ENCODE measurements at regions of chr6 and their contacts with region 1.

Region 1: DNA sequence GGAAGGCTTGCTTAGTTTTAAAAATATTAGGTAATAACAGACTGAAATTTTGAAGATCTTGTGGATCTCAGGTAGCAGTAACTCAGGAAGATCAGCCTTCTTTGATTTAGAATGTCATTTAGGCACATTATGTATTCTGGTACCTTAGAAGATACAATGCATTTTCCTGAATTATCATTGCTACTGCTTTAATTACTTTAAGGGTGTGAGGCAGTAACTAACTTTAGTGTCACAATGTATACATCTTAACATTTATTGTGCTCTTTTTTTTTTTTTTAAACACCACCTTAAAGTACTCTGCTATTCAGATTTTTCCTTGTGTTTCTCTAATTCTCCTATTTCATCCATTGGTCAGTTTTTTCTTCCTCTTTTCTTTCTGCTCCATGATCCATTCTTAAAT is 13.3 kb downstream of the MAPK14 start:
- DNase-seq: no peak
- ATAC-seq: no peak
- H3K4me3 Mint-ChIP-seq: no peak overlapping the region
- H3K27ac Mint-ChIP-seq: no peak overlapping the region
- H3K4me1 Mint-ChIP-seq: peaks cover 58% of the 10 kb centered on the region
- H3K27me3 Mint-ChIP-seq: no peaks in the 10 kb centered on the region
- CTCF ChIP-seq: no peak

Region 2: DNA sequence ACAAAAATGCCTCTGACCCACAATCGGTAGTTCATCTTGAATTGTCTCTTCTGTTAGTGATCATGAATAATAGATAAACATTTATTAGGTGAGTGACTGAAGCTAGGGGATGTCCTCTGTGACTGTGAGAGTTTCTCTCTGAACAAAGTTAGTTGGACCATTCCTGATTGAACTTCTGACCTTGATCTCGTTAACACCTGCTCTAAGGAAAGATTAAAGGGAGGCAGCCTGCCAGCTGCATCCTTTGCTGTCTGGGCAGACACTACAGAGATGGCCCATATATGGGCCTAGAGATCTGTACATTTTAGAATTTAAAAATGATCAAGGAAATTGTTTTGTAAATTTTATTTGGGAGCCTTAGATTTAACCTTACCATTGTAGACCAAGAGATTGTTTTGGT is 14.0 kb after region 1 on chr6:
- CTCF ChIA-PET with region 1: no interaction called
- POLR2A ChIA-PET with region 1: no interaction called
- intact Hi-C with region 1: loop called (anchors 2 kb)
- DNase-seq: no peak
- ATAC-seq: no peak
- H3K4me3 Mint-ChIP-seq: no peak overlapping the region
- H3K27ac Mint-ChIP-seq: no peak overlapping the region
- H3K4me1 Mint-ChIP-seq: no peaks in the 10 kb centered on the region
- H3K27me3 Mint-ChIP-seq: no peaks in the 10 kb centered on the region
- CTCF ChIP-seq: no peak

Region 3: DNA sequence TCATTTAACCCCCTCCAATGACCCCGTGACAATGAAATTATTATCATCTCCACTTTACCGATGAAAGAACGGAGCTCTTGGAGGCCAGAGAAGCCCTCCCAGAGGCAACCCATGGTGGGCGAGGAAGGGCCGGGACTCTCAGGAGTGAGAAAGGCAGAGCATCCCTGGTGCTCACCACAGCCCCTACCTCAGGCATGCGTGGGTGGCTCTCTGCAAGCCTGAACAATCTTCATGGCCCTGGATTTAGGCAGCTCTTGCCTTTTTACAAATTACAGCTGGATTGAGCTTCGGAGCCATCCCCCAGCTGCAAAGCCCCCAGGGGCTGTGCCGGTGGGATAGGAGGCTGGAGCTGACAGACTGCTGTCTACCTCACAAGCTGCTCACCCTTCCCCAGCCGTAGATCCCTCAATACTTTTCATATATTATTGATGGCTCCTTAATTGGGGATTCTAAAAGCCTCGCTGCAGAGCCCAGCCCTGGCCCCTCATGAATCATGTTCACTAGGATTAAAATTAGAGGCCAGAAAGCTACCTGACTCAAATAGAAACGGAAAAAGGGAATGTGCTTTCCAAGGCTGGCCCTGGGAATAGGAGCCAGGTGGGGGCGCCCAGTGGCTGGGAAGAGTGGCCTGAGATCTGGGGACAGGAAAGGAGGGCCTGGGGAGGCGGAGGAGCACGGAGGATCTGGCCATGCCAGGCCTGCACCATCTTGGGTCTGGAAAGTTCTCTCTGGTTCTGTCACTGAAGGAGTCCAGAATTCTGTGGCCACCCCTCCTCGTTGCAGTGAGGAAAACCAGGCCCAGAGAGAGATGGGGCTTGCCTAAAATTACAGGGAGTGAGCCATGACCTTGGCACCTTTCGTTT is 769.2 kb after region 1 on chr6:
- CTCF ChIA-PET with region 1: no interaction called
- POLR2A ChIA-PET with region 1: no interaction called
- intact Hi-C with region 1: no loop called
- DNase-seq: no peak
- ATAC-seq: no peak
- H3K4me3 Mint-ChIP-seq: no peak overlapping the region
- H3K27ac Mint-ChIP-seq: no peak overlapping the region
- H3K4me1 Mint-ChIP-seq: no peaks in the 10 kb centered on the region
- H3K27me3 Mint-ChIP-seq: peaks cover 17% of the 10 kb centered on the region
- CTCF ChIP-seq: no peak